Right ventricle myocardium inferior (tissue), 1 donor: ENCODE measurements at regions of chr11 and their contacts with region 1.

Region 1: DNA sequence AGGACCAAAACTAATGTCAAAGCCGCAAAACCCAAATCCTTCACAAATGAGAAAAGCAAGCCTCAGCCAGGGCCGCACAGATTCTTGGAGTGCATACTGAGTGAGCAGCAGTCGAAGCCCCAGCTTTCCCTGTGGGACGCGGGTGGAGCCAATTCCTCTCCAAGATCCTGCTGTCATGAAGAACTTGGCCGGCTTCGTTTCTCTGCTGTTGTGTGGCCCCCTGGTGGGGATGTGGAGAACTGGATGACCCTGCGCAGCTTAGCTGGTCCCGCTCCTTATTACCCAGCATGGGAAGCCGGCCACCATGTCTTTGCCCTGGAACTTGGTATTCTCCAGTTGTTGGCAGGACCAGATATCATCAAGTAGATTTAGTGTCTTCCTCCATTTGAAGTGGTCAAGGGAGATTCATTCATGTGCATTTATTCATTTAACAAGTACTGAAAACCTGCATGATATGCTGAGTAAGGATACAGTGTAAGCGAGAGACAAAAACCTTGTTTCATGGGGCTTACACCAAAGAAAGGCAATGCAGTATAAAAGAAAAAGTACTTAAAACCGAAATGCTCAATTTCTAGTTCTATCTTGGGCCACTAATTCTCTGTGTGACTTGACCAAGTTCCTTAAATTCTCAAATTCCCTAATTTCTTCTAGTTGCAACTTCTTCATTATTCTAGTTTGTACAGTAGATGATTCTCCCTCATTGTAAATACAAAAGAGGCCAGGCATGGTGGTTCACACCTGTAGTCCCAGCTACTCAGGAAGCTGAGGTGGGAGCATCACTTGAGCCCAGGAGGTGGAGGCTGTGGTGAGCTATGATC is 56.7 kb upstream of the CRTAM start:
- DNase-seq: peak; percentile 89
- ATAC-seq: peak; percentile 98

Region 2: DNA sequence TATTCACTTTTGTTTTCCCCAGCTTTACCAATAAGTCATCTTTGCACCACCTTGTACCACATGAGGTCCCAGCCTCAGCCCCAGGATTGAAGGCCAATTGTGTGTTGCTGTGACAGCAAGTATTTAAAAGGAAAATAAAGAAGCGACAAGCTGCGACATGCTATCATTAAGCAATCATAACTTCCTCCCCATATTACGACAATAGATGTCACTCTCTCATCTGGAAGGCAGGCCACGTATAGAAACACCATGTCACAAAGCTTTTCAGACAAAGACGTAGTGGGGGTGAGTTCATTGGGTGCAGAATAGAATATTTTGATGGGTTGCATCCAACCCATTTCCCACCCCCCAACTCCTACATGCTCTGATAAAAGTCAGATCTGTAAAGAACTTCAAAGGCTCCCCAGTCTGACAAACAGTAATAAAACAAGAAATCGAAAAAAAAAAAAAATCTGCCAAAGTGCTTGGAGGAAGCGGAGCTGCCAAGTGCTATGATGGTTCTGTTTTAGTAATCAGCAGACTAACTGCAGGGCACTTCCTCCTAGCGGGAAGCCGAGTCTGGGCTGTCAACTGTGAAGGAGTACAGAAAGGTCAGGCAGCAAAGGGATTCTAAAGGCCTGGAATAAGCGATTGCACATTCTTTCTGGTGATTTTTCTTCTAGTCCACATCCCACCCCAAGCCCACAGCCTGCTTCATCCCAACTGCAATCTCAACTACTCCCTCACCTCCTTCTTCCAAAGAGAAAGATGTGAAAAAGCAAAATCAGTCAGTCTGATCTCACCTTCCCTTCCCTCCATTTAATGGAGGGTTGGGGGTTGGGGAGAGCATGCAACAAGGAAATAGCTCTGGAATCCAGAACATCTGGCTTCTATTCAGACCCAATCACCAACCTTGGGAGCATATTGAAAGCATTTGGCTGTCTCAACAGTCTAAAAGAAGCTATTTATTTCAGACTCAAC is 257.5 kb before region 1 on chr11:
- intact Hi-C with region 1: no loop called
- DNase-seq: no peak
- ATAC-seq: peak; percentile 68

Region 3: GRCh38 chr11:122584670-122585069 is 196.9 kb before region 1 on chr11:
- intact Hi-C with region 1: loop called (anchors 5 kb)
- DNase-seq: no peak
- ATAC-seq: no peak

Region 4: GRCh38 chr11:122628810-122629555 is 152.6 kb before region 1 on chr11:
- intact Hi-C with region 1: loop called (anchors 1 kb)
- DNase-seq: no peak
- ATAC-seq: peak; percentile 67

Region 5: GRCh38 chr11:122897606-122898485 is 116.3 kb after region 1 on chr11:
- intact Hi-C with region 1: no loop called
- DNase-seq: no peak
- ATAC-seq: no peak